Calu3 (cell line): ENCODE measurements at regions of chr5 and their contacts with region 1.

Region 1: DNA sequence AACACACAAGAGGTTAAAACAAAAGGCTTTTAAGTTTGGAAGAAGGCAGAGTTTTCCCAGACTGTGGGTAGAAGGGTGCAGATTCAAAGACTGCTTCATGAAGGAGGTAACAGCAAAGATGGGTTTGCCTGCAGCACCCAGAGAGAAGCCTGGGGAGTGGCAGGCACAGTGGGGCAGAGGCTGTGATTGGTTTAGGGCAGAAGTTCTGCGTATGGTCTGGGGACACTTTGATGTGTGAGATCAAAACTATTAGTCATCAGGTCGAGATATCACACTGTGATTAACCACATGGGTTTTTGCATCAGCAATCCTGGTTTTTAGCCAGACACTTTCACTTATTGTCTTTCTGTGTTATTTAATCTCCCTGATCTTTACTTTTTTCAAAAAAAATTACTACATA is 188.8 kb upstream of the GLRA1 start:
- DNase-seq: no peak
- H3K4me3 Mint-ChIP-seq: no peak overlapping the region
- H3K27ac Mint-ChIP-seq: no peak overlapping the region
- H3K4me1 Mint-ChIP-seq: no peaks in the 10 kb centered on the region
- H3K27me3 Mint-ChIP-seq: peaks cover 14% of the 10 kb centered on the region
- CTCF ChIP-seq: no peak

Region 2: GRCh38 chr5:152136918-152137462 is 23.6 kb after region 1 on chr5:
- CTCF ChIA-PET with region 1: no interaction called
- intact Hi-C with region 1: loop called (anchors 1 kb)
- DNase-seq: no peak
- H3K4me3 Mint-ChIP-seq: no peak overlapping the region
- H3K27ac Mint-ChIP-seq: no peak overlapping the region
- H3K4me1 Mint-ChIP-seq: no peaks in the 10 kb centered on the region
- H3K27me3 Mint-ChIP-seq: peaks cover 73% of the 10 kb centered on the region
- CTCF ChIP-seq: no peak

Region 3: GRCh38 chr5:152185276-152186245 is 72.2 kb after region 1 on chr5:
- CTCF ChIA-PET with region 1: no interaction called
- intact Hi-C with region 1: no loop called
- DNase-seq: no peak
- H3K4me3 Mint-ChIP-seq: no peak overlapping the region
- H3K27ac Mint-ChIP-seq: no peak overlapping the region
- H3K4me1 Mint-ChIP-seq: peaks cover 15% of the 10 kb centered on the region
- H3K27me3 Mint-ChIP-seq: peaks cover 12% of the 10 kb centered on the region
- CTCF ChIP-seq: no peak